Heart left ventricle (tissue), 16 donors: ENCODE measurements at regions of chr20 and their contacts with region 1.

Region 1: GRCh38 chr20:24992487-24993205 is at the start of gene APMAP:
- DNase-seq: peak; percentile 96 to 98 (median 97)
- ATAC-seq: peak; percentile 89 to 97 (median 96)
- H3K4me3 ChIP-seq: peak within 1 kb of the TSS; percentile 63 to 98 (median 78)
- H3K27ac ChIP-seq: peak within 1 kb of the TSS; percentile 81 to 99 (median 94)
- H3K4me1 ChIP-seq: peaks cover 0 to 60% (median 31%) of the 10 kb centered on the region in 12 donors
- H3K27me3 ChIP-seq: no peaks in the 10 kb centered on the region
- CTCF ChIP-seq: peak in 1 of 12 donors; percentile 4
- POLR2A ChIP-seq: peak; percentile 49 to 96
- total RNA-seq, gene APMAP: 22.6 to 61.3 (median 31.9) TPM

Region 2: DNA sequence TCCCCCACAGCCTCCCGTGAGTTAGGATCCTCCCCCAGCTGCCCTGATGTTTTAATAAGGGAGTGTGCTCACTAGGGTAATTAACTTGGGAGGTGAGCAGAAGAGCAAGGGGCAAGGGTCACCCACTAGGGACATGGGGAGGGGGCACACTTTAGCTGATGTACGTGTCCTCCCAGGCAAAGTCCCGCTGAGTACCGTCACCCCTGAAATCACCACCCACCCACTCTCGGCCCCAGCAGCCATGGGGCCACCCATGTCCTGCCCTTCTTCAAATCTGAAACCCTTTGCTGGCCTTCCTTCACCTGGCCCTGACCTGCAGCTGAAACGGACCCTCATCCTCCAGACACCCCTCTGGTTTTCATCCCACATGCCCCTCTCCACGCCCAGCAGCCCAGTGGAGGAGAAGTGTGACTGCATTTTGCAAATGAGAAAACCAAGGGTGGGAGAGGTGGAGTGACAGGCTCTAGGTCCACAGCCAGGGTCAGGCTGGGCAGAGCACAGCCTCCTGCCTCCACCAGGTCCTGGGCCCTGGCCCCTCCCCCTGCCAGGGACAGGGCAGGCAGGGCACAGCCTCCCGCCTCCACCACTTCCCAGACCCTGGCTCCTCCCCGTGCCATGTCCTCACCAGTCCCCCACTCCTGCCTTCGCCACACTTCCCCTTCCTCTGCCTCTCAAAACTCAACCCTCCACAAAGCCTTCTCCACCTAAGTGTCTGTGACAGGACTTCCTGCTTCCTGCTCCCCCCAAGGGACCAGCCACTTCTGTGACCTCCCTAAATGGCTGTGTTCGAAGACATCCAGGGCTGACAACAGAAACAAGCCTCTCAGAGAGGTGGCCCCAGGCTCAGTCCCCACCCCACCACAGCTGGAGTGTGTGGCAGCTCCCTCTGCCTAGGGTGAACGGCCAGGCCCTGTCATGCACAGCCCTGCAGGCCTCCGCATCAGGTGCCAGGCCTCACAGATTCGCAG is 50.2 kb after region 1 on chr20:
- intact Hi-C with region 1: loop called in 1 of 10 experiments (anchors 5 kb)
- DNase-seq: peak; percentile 78 to 88 (median 84)
- ATAC-seq: peak; percentile 15 to 67 (median 42)
- H3K4me3 ChIP-seq: no peak overlapping the region
- H3K27ac ChIP-seq: peak overlapping the region; percentile 63 to 96 (median 91)
- H3K4me1 ChIP-seq: peaks cover 19 to 99% (median 93%) of the 10 kb centered on the region in 12 donors
- H3K27me3 ChIP-seq: no peaks in the 10 kb centered on the region
- CTCF ChIP-seq: no peak
- POLR2A ChIP-seq: no peak

Region 3: GRCh38 chr20:25065625-25066338 is 73.1 kb after region 1 on chr20:
- intact Hi-C with region 1: loop called (anchors 1 to 2 kb)
- DNase-seq: peak in 2 of 5 donors; percentile 50 to 53
- ATAC-seq: peak; percentile 67 to 88 (median 73)
- H3K4me3 ChIP-seq: peak overlapping the region in 1 of 12 donors; percentile 10
- H3K27ac ChIP-seq: no peak overlapping the region
- H3K4me1 ChIP-seq: peaks cover 0 to 20% (median 5%) of the 10 kb centered on the region in 12 donors
- H3K27me3 ChIP-seq: peaks cover 0 to 16% (median 3%) of the 10 kb centered on the region in 9 donors
- CTCF ChIP-seq: peak; percentile 68 to 95 (median 86)
- POLR2A ChIP-seq: no peak

Region 4: GRCh38 chr20:25195014-25195961 is 202.6 kb after region 1 on chr20 and contains the start of gene ENTPD6:
- intact Hi-C with region 1: loop called in 4 of 10 experiments (anchors 5 kb)
- DNase-seq: peak; percentile 94 to 97 (median 94)
- ATAC-seq: peak; percentile 71 to 88 (median 88)
- H3K4me3 ChIP-seq: peak within 1 kb of the TSS; percentile 63 to 99 (median 90)
- H3K27ac ChIP-seq: peak within 1 kb of the TSS; percentile 79 to 98 (median 93)
- H3K4me1 ChIP-seq: peaks cover 0 to 70% (median 42%) of the 10 kb centered on the region in 12 donors
- H3K27me3 ChIP-seq: no peaks in the 10 kb centered on the region
- CTCF ChIP-seq: peak in 6 of 12 donors; percentile 15 to 52 (median 40)
- POLR2A ChIP-seq: peak; percentile 52 to 85
- total RNA-seq, gene ENTPD6: 58.7 to 139 (median 86.7) TPM

Region 5: GRCh38 chr20:25254986-25255680 is 262.5 kb after region 1 on chr20:
- intact Hi-C with region 1: loop called in 1 of 10 experiments (anchors 5 kb)
- DNase-seq: peak in 4 of 5 donors; percentile 72 to 87 (median 81)
- ATAC-seq: peak; percentile 90 to 92 (median 92)
- H3K4me3 ChIP-seq: peak overlapping the region in 2 of 12 donors; percentile 6 to 9
- H3K27ac ChIP-seq: peak overlapping the region; percentile 64 to 99 (median 96)
- H3K4me1 ChIP-seq: peaks cover 0 to 86% (median 51%) of the 10 kb centered on the region in 12 donors
- H3K27me3 ChIP-seq: no peaks in the 10 kb centered on the region
- CTCF ChIP-seq: peak in 5 of 12 donors; percentile 6 to 24 (median 11)
- POLR2A ChIP-seq: peak in 1 of 2 donors; percentile 8

Region 6: GRCh38 chr20:25390538-25391528 is 398.2 kb after region 1 on chr20 and contains the start of gene ABHD12:
- intact Hi-C with region 1: loop called in 5 of 10 experiments (anchors 2 to 5 kb)
- DNase-seq: peak; percentile 96 to 98 (median 98)
- ATAC-seq: peak; percentile 99 to 100 (median 100)
- H3K4me3 ChIP-seq: peak within 1 kb of the TSS; percentile 67 to 97 (median 87)
- H3K27ac ChIP-seq: peak within 1 kb of the TSS; percentile 48 to 93 (median 88)
- H3K4me1 ChIP-seq: peaks cover 0 to 19% (median 7%) of the 10 kb centered on the region in 12 donors
- H3K27me3 ChIP-seq: no peaks in the 10 kb centered on the region
- CTCF ChIP-seq: peak in 1 of 12 donors; percentile 4
- POLR2A ChIP-seq: peak; percentile 49 to 51
- total RNA-seq, gene ABHD12: 15.6 to 43.8 (median 26.5) TPM

Region 7: GRCh38 chr20:25407311-25408169 is 414.9 kb after region 1 on chr20 and contains the start of gene GINS1:
- intact Hi-C with region 1: loop called in 2 of 10 experiments (anchors 5 to 10 kb)
- DNase-seq: peak; percentile 82 to 91 (median 85)
- ATAC-seq: peak; percentile 68 to 98 (median 94)
- H3K4me3 ChIP-seq: peak within 1 kb of the TSS; percentile 30 to 84 (median 58)
- H3K27ac ChIP-seq: peak within 1 kb of the TSS in 8 of 12 donors; percentile 2 to 36 (median 26)
- H3K4me1 ChIP-seq: peaks cover 0 to 19% (median 7%) of the 10 kb centered on the region in 12 donors
- H3K27me3 ChIP-seq: no peaks in the 10 kb centered on the region
- CTCF ChIP-seq: no peak
- POLR2A ChIP-seq: no peak
- total RNA-seq, gene GINS1: 0.19 to 3.1 (median 0.36) TPM